Heart left ventricle (tissue), 16 donors: ENCODE measurements at regions of chr12 and their contacts with region 1.

Region 1: GRCh38 chr12:27243804-27244683 is at the start of gene STK38L:
- DNase-seq: peak; percentile 98 to 99 (median 99)
- ATAC-seq: peak; percentile 94 to 99 (median 98)
- H3K4me3 ChIP-seq: peak within 1 kb of the TSS; percentile 59 to 96 (median 76)
- H3K27ac ChIP-seq: peak within 1 kb of the TSS; percentile 73 to 97 (median 90)
- H3K4me1 ChIP-seq: peaks cover 0 to 38% (median 25%) of the 10 kb centered on the region in 12 donors
- H3K27me3 ChIP-seq: no peaks in the 10 kb centered on the region
- CTCF ChIP-seq: peak in 9 of 12 donors; percentile 6 to 44 (median 29)
- POLR2A ChIP-seq: peak; percentile 73 to 98
- total RNA-seq, gene STK38L: 26.3 to 142 (median 83.7) TPM

Region 2: DNA sequence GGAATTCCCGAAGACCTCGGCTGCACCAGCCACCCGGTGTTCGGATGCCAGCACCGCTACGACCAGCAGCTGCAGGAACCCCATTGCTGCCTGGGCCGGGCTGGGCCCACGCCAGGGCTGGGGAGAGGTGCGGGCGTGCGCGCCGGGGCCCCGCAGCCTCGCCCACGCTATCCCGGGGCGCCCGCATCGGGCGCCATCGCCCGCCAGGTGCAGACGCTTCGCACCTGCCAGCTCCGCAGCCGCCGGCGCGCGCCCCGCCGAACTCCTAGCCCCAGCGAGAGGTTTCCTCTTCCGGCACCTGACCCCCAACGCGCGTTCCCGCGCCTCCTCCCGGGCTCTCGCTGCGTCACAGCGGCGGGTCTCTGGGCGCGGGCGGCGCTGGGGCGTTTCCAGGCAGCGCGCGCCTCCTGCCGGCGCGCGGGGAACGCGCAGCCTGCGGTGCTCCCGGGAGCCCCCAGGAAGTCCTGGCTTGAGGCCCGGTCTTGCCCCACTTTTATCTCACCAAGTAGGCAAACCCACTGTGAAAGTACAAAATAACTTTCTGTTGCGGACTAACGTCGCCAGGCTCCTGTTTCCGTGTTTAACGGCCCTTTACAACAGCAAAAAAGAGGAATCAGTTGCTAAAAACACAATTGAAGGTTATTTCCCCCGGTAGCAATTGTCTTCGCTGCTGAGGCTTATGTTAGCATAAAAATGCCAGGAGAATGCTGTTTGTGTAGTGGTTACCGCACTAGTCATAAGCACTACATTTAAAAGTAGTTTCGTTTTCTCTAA is 229.8 kb before region 1 on chr12 and contains the start of gene TM7SF3:
- intact Hi-C with region 1: loop called in 3 of 10 experiments (anchors 2 to 10 kb)
- DNase-seq: peak; percentile 93 to 97 (median 94)
- ATAC-seq: peak; percentile 86 to 97 (median 96)
- H3K4me3 ChIP-seq: peak within 1 kb of the TSS; percentile 61 to 97 (median 86)
- H3K27ac ChIP-seq: peak within 1 kb of the TSS; percentile 77 to 97 (median 91)
- H3K4me1 ChIP-seq: peaks cover 0 to 56% (median 32%) of the 10 kb centered on the region in 12 donors
- H3K27me3 ChIP-seq: no peaks in the 10 kb centered on the region
- CTCF ChIP-seq: peak; percentile 93 to 100 (median 97)
- POLR2A ChIP-seq: peak in 1 of 2 donors; percentile 79
- total RNA-seq, gene TM7SF3: 13.8 to 84.0 (median 28.3) TPM

Region 3: GRCh38 chr12:27142101-27142721 is 101.8 kb before region 1 on chr12:
- intact Hi-C with region 1: loop called in 4 of 10 experiments (anchors 2 to 10 kb)
- DNase-seq: peak in 4 of 5 donors; percentile 47 to 74 (median 64)
- ATAC-seq: peak; percentile 78 to 96 (median 94)
- H3K4me3 ChIP-seq: no peak overlapping the region
- H3K27ac ChIP-seq: peak overlapping the region in 2 of 12 donors; percentile 6 to 15
- H3K4me1 ChIP-seq: peaks cover 0 to 17% (median 3%) of the 10 kb centered on the region in 12 donors
- H3K27me3 ChIP-seq: no peaks in the 10 kb centered on the region
- CTCF ChIP-seq: peak; percentile 65 to 93 (median 80)
- POLR2A ChIP-seq: no peak

Region 4: DNA sequence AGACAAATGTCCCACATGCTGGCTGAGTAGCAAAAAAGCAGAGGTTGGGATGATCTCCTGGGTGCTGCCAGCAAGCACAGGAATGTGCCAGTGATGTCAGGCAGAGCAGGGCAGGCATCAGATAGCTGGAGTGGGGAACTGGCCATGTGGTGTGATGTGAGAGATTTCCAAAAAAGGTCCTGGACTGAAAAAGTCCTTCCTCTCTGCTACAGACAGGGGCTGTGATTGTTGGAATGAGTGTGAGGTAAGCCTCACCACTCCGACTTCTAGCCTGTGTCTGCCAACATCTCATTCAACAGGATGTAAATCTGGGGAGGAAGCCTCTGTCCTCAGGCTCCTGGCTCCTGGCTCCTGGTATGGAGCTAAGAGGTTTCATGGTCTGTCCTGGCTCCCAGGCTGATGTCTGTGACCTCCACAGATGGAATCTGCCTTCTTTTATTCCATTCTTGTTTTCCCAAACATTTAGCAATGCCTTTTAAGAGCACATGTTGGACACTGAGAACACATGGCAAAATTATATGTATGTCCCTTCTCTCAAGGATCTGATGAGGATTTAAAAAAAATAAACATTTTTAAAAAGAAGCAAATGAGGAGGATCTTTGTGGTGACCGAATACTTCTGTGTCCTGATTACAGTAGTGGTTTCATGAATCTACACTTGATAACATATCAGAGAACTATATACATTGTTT is 50.0 kb before region 1 on chr12:
- intact Hi-C with region 1: loop called in 4 of 10 experiments (anchors 5 to 10 kb)
- DNase-seq: peak; percentile 57 to 80 (median 71)
- ATAC-seq: peak; percentile 85 to 93 (median 92)
- H3K4me3 ChIP-seq: no peak overlapping the region
- H3K27ac ChIP-seq: peak overlapping the region; percentile 19 to 92 (median 78)
- H3K4me1 ChIP-seq: peaks cover 0 to 57% (median 26%) of the 10 kb centered on the region in 12 donors
- H3K27me3 ChIP-seq: no peaks in the 10 kb centered on the region
- CTCF ChIP-seq: peak in 3 of 12 donors; percentile 13 to 22 (median 19)
- POLR2A ChIP-seq: peak in 1 of 2 donors; percentile 68

Region 5: GRCh38 chr12:27293463-27293862 is 49.4 kb after region 1 on chr12:
- intact Hi-C with region 1: loop called in 6 of 10 experiments (anchors 5 kb)
- DNase-seq: peak in 2 of 5 donors; percentile 53
- ATAC-seq: peak in 1 of 4 donors; percentile 73
- H3K4me3 ChIP-seq: no peak overlapping the region
- H3K27ac ChIP-seq: peak overlapping the region in 9 of 12 donors; percentile 55 to 76 (median 70)
- H3K4me1 ChIP-seq: peaks cover 2 to 97% (median 63%) of the 10 kb centered on the region in 12 donors
- H3K27me3 ChIP-seq: no peaks in the 10 kb centered on the region
- CTCF ChIP-seq: no peak
- POLR2A ChIP-seq: no peak

Region 6: GRCh38 chr12:27523642-27524493 is 279.8 kb after region 1 on chr12 and contains the start of gene PPFIBP1:
- intact Hi-C with region 1: no loop called
- DNase-seq: peak; percentile 98 to 99 (median 99)
- ATAC-seq: peak; percentile 97 to 98 (median 98)
- H3K4me3 ChIP-seq: peak within 1 kb of the TSS; percentile 48 to 91 (median 76)
- H3K27ac ChIP-seq: peak within 1 kb of the TSS; percentile 75 to 97 (median 92)
- H3K4me1 ChIP-seq: peaks cover 4 to 64% (median 43%) of the 10 kb centered on the region in 12 donors
- H3K27me3 ChIP-seq: no peaks in the 10 kb centered on the region
- CTCF ChIP-seq: peak in 7 of 12 donors; percentile 18 to 37 (median 26)
- POLR2A ChIP-seq: peak in 1 of 2 donors; percentile 94
- total RNA-seq, gene PPFIBP1: 141 to 413 (median 277) TPM